MCF 10A (cell line): ENCODE measurements at regions of chr11 and their contacts with region 1.

Region 1: GRCh38 chr11:113730887-113731726 is 25.0 kb upstream of the TMPRSS5 start:
- DNase-seq: peak; percentile 53
- H3K4me3 Mint-ChIP-seq: no peak overlapping the region
- H3K27ac Mint-ChIP-seq: no peak overlapping the region
- H3K4me1 Mint-ChIP-seq: peaks cover 12% of the 10 kb centered on the region
- H3K27me3 Mint-ChIP-seq: no peaks in the 10 kb centered on the region
- CTCF ChIP-seq: peak; percentile 67

Region 2: GRCh38 chr11:113314389-113315301 is 416.5 kb before region 1 on chr11 and contains the start of gene TTC12:
- CTCF ChIA-PET with region 1: interaction called, 15 read pairs
- POLR2A ChIA-PET with region 1: interaction called, 6 read pairs
- intact Hi-C with region 1: no loop called
- DNase-seq: peak; percentile 92
- H3K4me3 Mint-ChIP-seq: peak within 1 kb of the TSS; percentile 80
- H3K27ac Mint-ChIP-seq: peak within 1 kb of the TSS; percentile 87
- H3K4me1 Mint-ChIP-seq: peaks cover 19% of the 10 kb centered on the region
- H3K27me3 Mint-ChIP-seq: no peaks in the 10 kb centered on the region
- CTCF ChIP-seq: no peak
- total RNA-seq, gene TTC12: 30.5 and 41.3 TPM in 2 replicates

Region 3: DNA sequence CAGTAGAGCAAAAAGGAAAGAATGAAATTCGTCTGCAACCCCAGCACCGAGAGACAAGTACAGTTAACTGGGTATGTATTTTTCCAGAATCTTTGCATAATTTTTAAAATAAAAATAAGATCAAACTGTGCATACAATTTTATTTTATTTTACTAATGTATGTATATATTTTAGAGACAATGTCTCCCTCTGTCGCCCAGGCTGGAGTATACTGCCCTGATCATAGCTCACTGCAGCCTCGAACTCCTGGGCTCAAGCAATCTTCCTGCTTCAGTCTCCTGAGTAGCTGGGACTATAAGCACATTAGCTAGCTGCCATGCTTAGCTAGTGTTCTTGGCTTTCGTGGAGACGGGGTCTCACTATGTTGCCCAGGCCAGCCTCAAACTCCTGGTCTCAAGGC is 237.1 kb before region 1 on chr11:
- CTCF ChIA-PET with region 1: interaction called, 23 read pairs
- POLR2A ChIA-PET with region 1: no interaction called
- intact Hi-C with region 1: loop called (anchors 10 kb)
- DNase-seq: peak; percentile 14
- H3K4me3 Mint-ChIP-seq: no peak overlapping the region
- H3K27ac Mint-ChIP-seq: no peak overlapping the region
- H3K4me1 Mint-ChIP-seq: no peaks in the 10 kb centered on the region
- H3K27me3 Mint-ChIP-seq: peaks cover 10% of the 10 kb centered on the region
- CTCF ChIP-seq: peak; percentile 35

Region 4: DNA sequence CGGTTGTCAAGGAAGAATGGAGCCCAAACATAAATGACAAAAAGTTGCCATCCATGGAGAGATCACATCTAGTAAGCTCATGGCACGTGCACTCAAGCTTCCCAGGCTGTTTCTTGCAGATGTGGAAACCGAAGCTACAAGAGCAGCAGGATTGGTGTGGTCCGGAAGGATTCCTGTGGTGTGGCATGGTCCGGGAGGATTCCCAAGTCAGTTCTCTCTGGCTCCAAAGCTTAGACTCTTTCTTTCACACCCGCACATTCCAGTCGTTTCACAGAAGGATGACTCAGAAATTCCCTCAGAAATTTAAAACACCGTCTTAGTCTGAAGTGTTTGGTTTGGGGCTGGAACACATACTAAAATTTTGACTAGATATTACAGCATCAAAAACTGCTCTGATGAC is 177.9 kb before region 1 on chr11:
- CTCF ChIA-PET with region 1: interaction called, 8 read pairs
- POLR2A ChIA-PET with region 1: no interaction called
- intact Hi-C with region 1: loop called (anchors 5 kb)
- DNase-seq: peak; percentile 81
- H3K4me3 Mint-ChIP-seq: no peak overlapping the region
- H3K27ac Mint-ChIP-seq: peak overlapping the region; percentile 5
- H3K4me1 Mint-ChIP-seq: peaks cover 26% of the 10 kb centered on the region
- H3K27me3 Mint-ChIP-seq: no peaks in the 10 kb centered on the region
- CTCF ChIP-seq: no peak